ENCODE measurements at regions of chr1 and their contacts with region 1.

Region 1: GRCh38 chr1:101288491-101288944 is 51.7 kb downstream of the S1PR1 start:
- DNase-seq: peak; percentile 82
- H3K4me3 ChIP-seq: peak overlapping the region; percentile 31; the same call in 1 of the 2 replicates
- H3K27ac ChIP-seq: no peak overlapping the region
- H3K27me3 ChIP-seq: no peaks in the 10 kb centered on the region
- CTCF ChIP-seq: peak; percentile 92

Region 2: GRCh38 chr1:100895540-100896483 is 392.7 kb before region 1 on chr1 and contains the start of gene SLC30A7:
- CTCF ChIA-PET with region 1: interaction called, 15 read pairs
- POLR2A ChIA-PET with region 1: interaction called, 3 read pairs
- DNase-seq: peak; percentile 49
- H3K4me3 ChIP-seq: peak within 1 kb of the TSS; percentile 85
- H3K27ac ChIP-seq: peak within 1 kb of the TSS; percentile 90
- H3K27me3 ChIP-seq: no peaks in the 10 kb centered on the region
- CTCF ChIP-seq: no peak
- polyA plus RNA-seq, gene SLC30A7: 15.1 and 15.3 TPM in 2 replicates

Region 3: GRCh38 chr1:100928128-100928527 is 360.4 kb before region 1 on chr1:
- CTCF ChIA-PET with region 1: interaction called, 149 read pairs
- POLR2A ChIA-PET with region 1: no interaction called
- DNase-seq: no peak
- H3K4me3 ChIP-seq: no peak overlapping the region
- H3K27ac ChIP-seq: no peak overlapping the region
- H3K27me3 ChIP-seq: no peaks in the 10 kb centered on the region
- CTCF ChIP-seq: no peak

Region 4: DNA sequence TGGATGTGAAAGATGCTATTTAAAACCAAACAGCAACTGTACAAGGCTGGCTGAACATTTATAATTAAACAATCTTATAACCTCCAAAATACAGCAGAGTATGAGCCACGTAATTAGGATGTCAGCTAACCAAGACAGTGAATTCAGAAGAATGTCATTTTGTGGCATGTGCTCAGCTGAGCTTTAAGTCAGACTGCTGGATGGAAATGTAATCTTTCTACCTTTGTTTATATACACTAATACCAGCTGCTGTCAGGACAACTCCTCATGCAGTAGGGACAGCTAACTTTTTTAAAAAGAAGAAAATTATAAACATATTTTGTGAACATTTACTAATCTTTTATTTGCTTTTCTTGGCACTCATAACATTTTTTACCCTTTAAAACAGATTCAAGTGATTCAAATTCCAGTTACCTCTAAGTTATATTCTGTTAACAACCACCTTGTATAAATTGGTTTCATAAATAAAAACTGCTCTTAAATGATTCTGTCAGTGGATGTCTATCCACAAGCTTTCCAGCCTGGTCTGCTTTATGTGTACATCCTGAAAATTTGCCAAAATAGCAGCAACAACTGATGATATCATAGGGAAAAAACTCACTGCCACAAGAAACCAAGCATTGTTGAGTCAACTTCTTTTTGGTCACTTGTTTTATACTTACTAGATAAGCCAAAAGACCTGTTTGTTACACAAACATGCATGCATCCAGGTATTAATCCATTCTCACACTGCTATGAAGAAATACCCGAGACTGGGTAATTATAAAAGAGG is 299.0 kb before region 1 on chr1:
- CTCF ChIA-PET with region 1: interaction called, 14 read pairs
- POLR2A ChIA-PET with region 1: no interaction called
- DNase-seq: peak; percentile 79
- H3K4me3 ChIP-seq: no peak overlapping the region
- H3K27ac ChIP-seq: peak overlapping the region; percentile 59
- H3K27me3 ChIP-seq: no peaks in the 10 kb centered on the region
- CTCF ChIP-seq: no peak

Region 5: GRCh38 chr1:101238681-101239094 is 49.8 kb before region 1 on chr1:
- CTCF ChIA-PET with region 1: interaction called, 24 read pairs
- POLR2A ChIA-PET with region 1: no interaction called
- DNase-seq: peak; percentile 72
- H3K4me3 ChIP-seq: peak overlapping the region; percentile 80
- H3K27ac ChIP-seq: no peak overlapping the region
- H3K27me3 ChIP-seq: no peaks in the 10 kb centered on the region
- CTCF ChIP-seq: peak; percentile 96

Region 6: GRCh38 chr1:101259744-101260148 is 28.8 kb before region 1 on chr1:
- CTCF ChIA-PET with region 1: interaction called, 35 read pairs
- POLR2A ChIA-PET with region 1: interaction called, 7 read pairs
- DNase-seq: no peak
- H3K4me3 ChIP-seq: no peak overlapping the region
- H3K27ac ChIP-seq: peak overlapping the region; percentile 13
- H3K27me3 ChIP-seq: no peaks in the 10 kb centered on the region
- CTCF ChIP-seq: no peak

Region 7: DNA sequence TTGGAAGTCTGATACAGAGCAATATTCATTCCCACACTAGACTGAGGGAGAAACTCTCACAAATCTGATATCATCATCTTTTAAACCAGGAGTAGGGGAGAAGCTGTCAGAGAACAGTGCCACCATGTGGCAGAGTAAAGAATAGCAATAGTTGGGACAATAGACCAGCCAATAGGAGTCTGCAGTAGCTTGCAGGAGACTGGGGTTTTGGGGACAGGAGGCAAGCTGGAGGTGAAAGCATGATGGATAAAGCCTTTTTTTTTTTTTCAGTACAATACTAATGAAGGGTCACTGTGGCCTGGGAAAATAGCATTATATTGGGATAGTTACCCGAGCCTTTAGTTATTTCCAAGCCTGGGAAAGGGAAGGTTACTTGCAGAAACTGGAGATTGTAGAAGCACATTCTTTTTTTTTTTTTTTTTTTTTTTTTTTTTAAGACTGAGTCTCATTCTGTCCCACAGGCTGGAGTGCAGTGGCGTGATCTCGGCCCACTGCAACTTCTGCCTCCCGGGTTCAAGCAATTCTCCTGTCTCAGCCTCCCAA is 69.0 kb after region 1 on chr1:
- CTCF ChIA-PET with region 1: interaction called, 13 read pairs
- POLR2A ChIA-PET with region 1: no interaction called
- DNase-seq: peak; percentile 58
- H3K4me3 ChIP-seq: no peak overlapping the region
- H3K27ac ChIP-seq: no peak overlapping the region
- H3K27me3 ChIP-seq: no peaks in the 10 kb centered on the region
- CTCF ChIP-seq: peak; percentile 92

Region 8: DNA sequence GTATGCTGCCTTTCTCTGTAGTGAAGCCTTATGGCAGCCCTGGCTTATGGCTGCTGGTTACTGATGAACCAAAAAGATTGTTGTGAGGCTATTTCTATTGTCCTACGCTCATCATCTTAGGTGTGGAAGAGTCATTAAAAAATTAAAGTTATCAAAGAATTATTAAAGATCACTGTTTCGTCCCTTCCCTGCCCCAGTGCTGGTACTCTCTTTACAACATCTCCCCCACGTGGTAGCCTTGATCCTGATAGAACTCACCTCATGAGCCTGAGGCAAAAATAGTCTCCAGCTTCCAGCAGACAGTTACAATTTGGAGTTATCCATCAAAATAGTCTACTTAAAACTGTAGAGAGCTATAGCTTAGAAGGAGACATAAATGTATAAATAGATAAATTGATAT is 149.8 kb after region 1 on chr1:
- CTCF ChIA-PET with region 1: no interaction called
- POLR2A ChIA-PET with region 1: no interaction called
- DNase-seq: no peak
- H3K4me3 ChIP-seq: no peak overlapping the region
- H3K27ac ChIP-seq: no peak overlapping the region
- H3K27me3 ChIP-seq: no peaks in the 10 kb centered on the region
- CTCF ChIP-seq: peak; percentile 44

Measured in AG04450 (cell line).